Activated CD4-positive, alpha-beta T cell treated with anti-CD3 and anti-CD28 coated beads, Interleukin-2, amount 10 ng/mL, durations not matched to agents 7 days and 5 days (primary cell): ENCODE measurements at regions of chr1 and their contacts with region 1.

Region 1: DNA sequence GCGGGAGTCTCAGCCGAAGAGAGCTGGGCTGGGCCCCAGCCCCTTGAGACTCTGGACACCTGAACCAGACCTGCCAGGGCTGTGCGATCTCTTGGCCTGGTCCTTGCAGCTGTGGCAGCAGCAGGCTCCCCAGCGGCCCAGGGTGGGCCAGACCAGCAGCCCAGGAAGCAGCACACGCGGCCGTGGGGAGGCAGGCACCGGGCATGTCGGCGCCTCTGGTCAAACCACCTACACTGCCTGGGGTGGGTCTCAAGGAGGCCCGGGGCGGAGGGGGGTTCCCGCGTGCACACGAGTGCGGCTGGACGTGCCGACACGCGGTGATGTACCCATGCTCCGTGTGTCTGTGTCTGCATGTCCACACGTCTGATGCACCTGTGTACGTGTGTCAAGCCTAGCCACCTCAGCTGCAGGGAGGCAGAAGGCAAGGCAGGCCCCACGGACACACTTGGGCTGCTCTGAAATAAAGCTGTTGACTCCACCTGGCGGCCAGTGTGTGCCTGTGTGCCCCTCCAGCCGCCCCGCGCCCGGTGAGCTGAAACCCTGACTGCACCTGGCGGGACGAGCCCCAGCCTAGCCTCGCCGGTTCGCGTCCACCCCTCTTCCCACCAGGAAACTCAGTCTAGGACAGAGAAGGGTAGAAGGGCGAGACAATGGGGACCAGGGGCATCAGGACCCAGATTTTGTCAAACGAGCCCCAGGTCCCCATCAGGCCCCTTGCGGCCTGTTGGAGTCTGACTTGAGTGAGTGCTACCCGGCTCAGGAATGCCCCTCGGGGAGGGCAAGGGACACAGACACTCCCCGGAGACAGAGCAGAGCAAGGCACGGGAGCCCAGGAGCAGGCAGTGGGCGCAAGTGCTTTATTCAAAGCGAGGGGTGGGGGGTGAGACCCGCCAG is 11.6 kb downstream of the SCNN1D start:
- DNase-seq: peak; percentile 65
- H3K4me3 Mint-ChIP-seq: no peak overlapping the region
- H3K27ac Mint-ChIP-seq: no peak overlapping the region
- H3K4me1 Mint-ChIP-seq: no peaks in the 10 kb centered on the region
- H3K27me3 Mint-ChIP-seq: no peaks in the 10 kb centered on the region

Region 2: DNA sequence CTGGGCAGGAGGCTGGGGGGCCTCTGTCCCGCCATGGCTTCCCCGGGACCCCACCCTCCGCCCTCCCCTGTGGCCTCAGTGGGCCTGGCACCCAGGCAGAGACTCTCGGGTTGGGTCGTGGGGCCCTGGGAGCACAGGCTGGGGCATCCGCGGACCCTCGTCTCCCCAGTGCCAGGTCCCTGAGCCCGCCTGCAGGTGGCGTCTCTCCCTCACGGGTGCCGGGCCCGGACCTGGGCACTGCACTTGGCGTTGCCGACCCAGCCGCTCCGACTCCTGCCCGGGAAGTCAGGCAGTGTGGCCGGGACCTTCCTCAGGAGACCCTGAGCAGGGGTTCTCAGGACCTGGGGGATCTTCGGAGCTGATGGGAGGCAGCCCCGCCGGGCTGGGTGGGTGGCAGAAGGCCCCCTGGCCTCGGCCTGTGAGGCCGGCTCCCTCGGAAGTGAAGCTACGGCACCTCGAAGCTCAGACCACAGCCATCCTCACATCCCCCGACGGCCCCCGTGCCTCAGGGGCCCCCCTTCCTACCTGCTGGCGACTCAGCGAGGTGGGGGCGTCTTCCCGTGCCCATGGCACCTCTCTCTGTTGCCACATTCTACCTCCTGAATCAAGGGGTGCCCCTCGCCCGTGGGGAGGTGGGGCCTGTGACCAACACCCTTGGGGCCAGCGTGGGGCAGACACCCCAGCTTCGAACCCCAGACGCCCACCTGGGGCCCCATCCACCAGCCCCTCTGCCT is 169.6 kb before region 1 on chr1:
- CTCF ChIA-PET with region 1: interaction called, 36 read pairs
- POLR2A ChIA-PET with region 1: interaction called, 3 read pairs
- DNase-seq: peak; percentile 83
- H3K4me3 Mint-ChIP-seq: no peak overlapping the region
- H3K27ac Mint-ChIP-seq: no peak overlapping the region
- H3K4me1 Mint-ChIP-seq: peaks cover 11% of the 10 kb centered on the region
- H3K27me3 Mint-ChIP-seq: peaks cover 8% of the 10 kb centered on the region